Ascending aorta (tissue), 2 donors: ENCODE measurements at regions of chr16 and their contacts with region 1.

Region 1: GRCh38 chr16:72847187-72848027 is 200.5 kb downstream of the ZFHX3 start:
- DNase-seq: peak in 1 of 2 donors; percentile 68
- H3K4me3 ChIP-seq: peak overlapping the region; percentile 28 to 51
- H3K27ac ChIP-seq: peak overlapping the region; percentile 96 to 98
- H3K4me1 ChIP-seq: peaks cover 23 to 60% of the 10 kb centered on the region in 2 donors
- H3K27me3 ChIP-seq: no peaks in the 10 kb centered on the region
- CTCF ChIP-seq: peak in 2 of 3 experiments; percentile 51 to 58

Region 2: GRCh38 chr16:72832621-72833248 is 14.7 kb before region 1 on chr16:
- intact Hi-C with region 1: loop called (anchors 1 kb)
- DNase-seq: peak; percentile 26 to 89
- H3K4me3 ChIP-seq: no peak overlapping the region
- H3K27ac ChIP-seq: peak overlapping the region; percentile 63 to 66
- H3K4me1 ChIP-seq: peaks cover 6 to 16% of the 10 kb centered on the region in 2 donors
- H3K27me3 ChIP-seq: no peaks in the 10 kb centered on the region
- CTCF ChIP-seq: peak; percentile 83 to 99 (median 99)

Region 3: DNA sequence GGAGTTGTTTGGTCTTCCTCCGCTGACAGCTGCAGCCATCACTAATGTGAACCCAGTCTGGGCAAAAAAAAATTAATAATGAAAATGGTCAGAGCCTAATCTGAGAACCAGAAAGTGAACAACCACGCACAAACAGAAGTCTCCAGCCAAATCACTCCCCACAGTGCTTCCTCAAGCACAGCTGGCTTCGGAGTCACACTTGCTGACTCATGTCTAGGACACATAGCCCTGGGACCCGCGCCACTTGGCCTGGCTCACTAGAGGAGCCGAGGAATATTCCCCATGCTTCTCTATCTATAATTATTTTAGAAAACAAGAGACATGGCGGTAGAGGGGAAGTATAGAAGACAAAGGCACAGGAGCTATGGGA is 91.4 kb after region 1 on chr16:
- intact Hi-C with region 1: loop called (anchors 2 kb)
- DNase-seq: peak; percentile 83 to 94
- H3K4me3 ChIP-seq: peak overlapping the region in 1 of 2 donors; percentile 43
- H3K27ac ChIP-seq: peak overlapping the region; percentile 90 to 91
- H3K4me1 ChIP-seq: peaks cover 32 to 36% of the 10 kb centered on the region in 2 donors
- H3K27me3 ChIP-seq: no peaks in the 10 kb centered on the region
- CTCF ChIP-seq: no peak

Region 4: DNA sequence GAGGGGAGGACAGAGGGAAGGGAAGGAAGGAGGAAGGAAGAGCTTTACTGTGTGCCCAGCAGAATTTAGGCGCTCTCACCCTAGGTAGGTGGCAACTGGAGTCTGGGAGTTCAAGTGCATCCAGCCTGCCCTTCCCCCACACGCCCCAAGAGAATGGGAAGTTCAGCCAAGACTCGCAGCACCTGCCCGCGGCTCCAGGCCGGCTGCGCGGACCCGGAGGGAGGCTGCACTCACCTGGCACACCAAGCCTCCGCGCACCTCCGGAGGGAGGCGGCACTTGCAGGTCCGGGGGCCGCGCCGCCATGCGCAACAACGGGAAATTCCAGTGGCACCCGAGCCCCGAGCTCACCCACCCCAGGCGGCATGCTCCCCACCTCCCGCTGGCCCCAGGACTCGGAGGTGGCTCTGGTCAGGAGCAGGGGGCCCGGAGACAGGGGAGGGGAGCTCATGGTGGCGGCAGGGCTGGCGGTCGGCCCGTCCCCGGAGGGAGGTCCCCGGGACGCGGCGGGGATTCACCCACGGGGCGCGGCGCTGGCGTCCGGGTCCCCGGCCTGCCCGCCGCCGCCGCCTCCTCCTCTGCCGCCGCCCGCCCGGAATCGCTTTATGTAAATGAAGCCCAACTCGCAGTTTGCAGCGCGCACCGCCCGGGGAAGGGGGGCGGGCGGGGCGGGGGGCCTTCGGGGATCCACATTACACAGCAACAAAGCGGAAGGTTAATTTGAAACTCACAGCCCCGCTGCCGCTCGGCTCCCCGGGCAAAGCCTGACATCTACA is 200.3 kb after region 1 on chr16 and contains the start of gene ZFHX3:
- intact Hi-C with region 1: loop called (anchors 2 kb)
- DNase-seq: peak in 1 of 2 donors; percentile 91
- H3K4me3 ChIP-seq: peak within 1 kb of the TSS; percentile 88 to 89
- H3K27ac ChIP-seq: peak within 1 kb of the TSS; percentile 98 to 99
- H3K4me1 ChIP-seq: peaks cover 11 to 71% of the 10 kb centered on the region in 2 donors
- H3K27me3 ChIP-seq: no peaks in the 10 kb centered on the region
- CTCF ChIP-seq: peak in 1 of 3 experiments; percentile 28
- total RNA-seq, gene ZFHX3: 34.8 TPM

Region 5: GRCh38 chr16:73093146-73094144 is 246.0 kb after region 1 on chr16:
- intact Hi-C with region 1: loop called (anchors 5 kb)
- DNase-seq: peak in 1 of 2 donors; percentile 89
- H3K4me3 ChIP-seq: peak overlapping the region; percentile 5 to 61
- H3K27ac ChIP-seq: peak overlapping the region; percentile 93 to 95
- H3K4me1 ChIP-seq: peaks cover 6 to 32% of the 10 kb centered on the region in 2 donors
- H3K27me3 ChIP-seq: no peaks in the 10 kb centered on the region
- CTCF ChIP-seq: no peak

Region 6: GRCh38 chr16:73771196-73772064 is 924.0 kb after region 1 on chr16:
- intact Hi-C with region 1: loop called (anchors 2 kb)
- DNase-seq: no peak
- H3K4me3 ChIP-seq: no peak overlapping the region
- H3K27ac ChIP-seq: peak overlapping the region; percentile 64 to 82
- H3K4me1 ChIP-seq: peaks cover 15 to 41% of the 10 kb centered on the region in 2 donors
- H3K27me3 ChIP-seq: no peaks in the 10 kb centered on the region
- CTCF ChIP-seq: no peak